ENCODE measurements at regions of chr9 and their contacts with region 1.

Region 1: DNA sequence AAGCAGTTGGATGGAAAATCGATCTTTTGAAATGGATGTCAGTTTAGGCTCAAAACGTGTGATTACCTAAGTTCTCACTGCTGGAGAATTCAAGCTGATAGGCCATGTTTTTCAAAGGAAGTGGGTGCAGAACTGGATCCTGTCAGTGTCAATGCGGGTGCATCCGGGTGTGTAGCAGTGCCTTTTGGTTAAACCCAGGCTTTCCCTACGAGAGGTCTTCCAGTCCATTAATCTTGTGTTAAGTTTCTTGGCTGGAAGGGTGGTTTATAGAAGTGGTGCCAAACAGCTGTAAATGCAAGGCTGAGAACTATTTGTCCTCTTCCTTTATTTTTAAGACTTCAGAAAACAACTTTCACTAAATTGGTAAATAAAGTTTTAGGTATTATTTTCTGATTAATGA is 71.9 kb downstream of the DAPK1 start:
- DNase-seq: no peak
- H3K4me3 ChIP-seq: no peak overlapping the region
- H3K27ac ChIP-seq: peak overlapping the region in 1 of 2 experiments; percentile 1; a peak in 1 of 4 replicates
- H3K4me1 ChIP-seq: peaks cover 8 to 39% of the 10 kb centered on the region in 2 experiments; a peak in 3 of 4 replicates
- H3K27me3 ChIP-seq: no peaks in the 10 kb centered on the region
- CTCF ChIP-seq: no peak
- EP300 ChIP-seq: no peak
- RAD21 ChIP-seq: no peak

Region 2: DNA sequence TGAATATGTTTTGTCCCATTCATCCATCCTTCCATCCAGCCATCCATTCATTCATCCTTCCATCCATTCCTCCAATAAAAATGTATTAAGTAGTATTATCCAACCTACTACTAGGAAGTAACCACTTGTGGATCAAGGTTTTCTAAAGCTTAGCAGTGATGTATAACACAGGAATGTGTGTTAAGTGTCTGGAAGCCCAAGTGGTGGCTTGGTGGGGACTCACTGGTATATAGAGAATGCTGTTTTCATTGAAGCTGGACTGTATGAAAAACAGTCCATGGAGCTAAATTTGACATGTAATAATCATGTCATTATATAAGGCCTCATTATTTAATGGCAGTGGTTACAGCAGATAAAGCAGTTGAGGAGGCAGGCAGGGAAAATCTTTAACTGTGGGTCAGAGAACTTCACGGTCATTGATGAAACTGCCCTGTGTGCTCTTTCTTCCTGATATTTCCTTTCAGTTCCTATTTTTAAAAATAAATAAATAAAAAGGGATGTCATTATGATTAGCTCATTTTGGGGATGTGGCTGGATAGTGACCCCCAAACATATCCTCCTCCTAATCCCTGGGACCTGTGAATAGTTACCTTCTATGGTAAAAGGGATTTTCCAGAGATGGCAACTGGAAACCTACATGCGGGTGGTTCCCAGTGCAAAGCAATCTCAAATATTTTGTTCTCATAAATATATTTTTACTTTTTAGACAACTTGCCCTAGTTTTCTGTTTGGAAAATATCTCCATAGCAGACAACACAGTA is 10.4 kb after region 1 on chr9:
- CTCF ChIA-PET with region 1: interaction called, 5 read pairs
- POLR2A ChIA-PET with region 1: interaction called, 11 read pairs
- DNase-seq: no peak
- H3K4me3 ChIP-seq: no peak overlapping the region
- H3K27ac ChIP-seq: no peak overlapping the region
- H3K4me1 ChIP-seq: peaks cover 0 to 6% of the 10 kb centered on the region in 2 experiments; a peak in 3 of 4 replicates
- H3K27me3 ChIP-seq: no peaks in the 10 kb centered on the region
- CTCF ChIP-seq: no peak
- EP300 ChIP-seq: no peak
- RAD21 ChIP-seq: no peak

Measured in SK-N-SH (cell line).